Right lobe of liver (tissue), 6 donors: ENCODE measurements at regions of chr17 and their contacts with region 1.

Region 1: DNA sequence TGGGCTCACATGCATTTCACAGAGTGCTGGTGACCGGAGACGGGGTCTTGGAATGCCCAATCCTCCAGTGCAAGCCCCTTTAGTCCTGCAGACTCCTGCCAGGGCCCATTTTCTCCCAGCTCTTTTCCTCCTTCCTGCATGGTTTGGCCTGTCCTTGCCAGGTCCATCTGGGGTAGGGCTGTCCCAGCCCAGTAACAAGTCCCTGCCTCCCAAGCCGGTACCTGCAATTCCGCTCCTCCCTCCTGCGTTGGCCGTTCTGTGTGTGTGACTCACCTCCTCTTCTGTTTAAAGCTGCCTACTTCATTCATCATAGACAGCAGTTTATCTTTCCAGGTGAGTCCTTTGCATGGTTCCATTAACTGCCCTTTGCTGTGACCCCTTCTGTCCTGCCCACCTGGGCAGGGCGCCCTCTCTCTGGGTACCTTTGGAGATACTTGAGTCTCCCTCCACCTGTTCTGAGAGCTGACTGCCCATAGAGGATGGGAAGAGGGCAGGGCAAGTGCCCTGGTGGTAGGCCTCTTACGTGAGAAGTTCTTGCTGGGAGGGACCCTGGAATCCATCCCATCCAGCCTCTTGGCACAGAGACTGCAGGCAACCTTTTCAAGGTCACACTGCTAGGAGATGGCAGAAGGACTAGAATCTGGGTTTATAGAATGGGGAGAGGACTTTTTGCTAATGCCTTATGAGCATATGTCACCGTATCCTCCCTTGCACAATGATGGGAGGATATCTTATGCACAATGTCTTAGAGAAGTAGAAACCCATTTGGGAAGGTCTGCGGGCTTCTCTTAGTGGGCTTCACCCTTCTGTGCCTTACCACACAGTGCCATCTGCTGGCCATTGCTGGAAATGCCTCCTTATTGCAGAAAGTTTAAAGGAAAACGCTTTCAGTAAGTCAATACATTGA is 29.7 kb upstream of the LGALS9 start:
- DNase-seq: peak; percentile 44 to 75 (median 73)
- ATAC-seq: peak; percentile 57 to 77 (median 69)
- H3K4me3 ChIP-seq: no peak overlapping the region
- H3K27ac ChIP-seq: no peak overlapping the region
- H3K4me1 ChIP-seq: no peaks in the 10 kb centered on the region
- H3K27me3 ChIP-seq: no peaks in the 10 kb centered on the region
- CTCF ChIP-seq: peak; percentile 90 to 94 (median 92)
- POLR2A ChIP-seq: no peak

Region 2: DNA sequence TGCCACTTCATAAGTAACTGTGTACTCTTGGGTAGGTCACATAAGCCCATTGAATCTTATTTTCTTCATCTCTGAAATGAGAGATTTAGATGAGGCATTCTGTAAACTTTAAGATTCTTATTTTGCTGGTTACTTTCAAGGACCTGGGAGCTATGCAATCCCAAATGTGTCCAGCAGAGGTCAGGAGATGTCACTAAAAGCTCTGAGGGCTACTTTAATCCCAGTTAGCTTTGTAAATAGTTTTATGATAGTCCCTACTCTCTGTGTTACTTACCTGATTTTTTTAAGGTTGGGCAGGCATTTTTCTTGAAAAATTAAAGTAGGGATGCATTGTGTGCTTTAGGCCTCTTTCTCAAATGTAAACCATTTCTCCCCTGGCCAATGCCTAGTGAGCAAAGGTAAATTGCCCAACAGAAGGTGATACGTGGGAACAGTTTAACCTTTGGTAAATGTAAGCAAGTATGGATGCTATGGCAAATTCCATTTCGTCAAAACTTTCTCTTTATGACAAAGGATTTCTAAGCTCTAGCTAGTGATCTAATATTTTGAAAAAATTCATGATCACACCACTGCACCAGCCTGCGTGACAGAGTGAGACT is 364.5 kb before region 1 on chr17:
- intact Hi-C with region 1: loop called (anchors 5 to 10 kb)
- DNase-seq: peak in 1 of 3 donors; percentile 64
- ATAC-seq: peak; percentile 88 to 94 (median 91)
- H3K4me3 ChIP-seq: no peak overlapping the region
- H3K27ac ChIP-seq: no peak overlapping the region
- H3K4me1 ChIP-seq: no peaks in the 10 kb centered on the region
- H3K27me3 ChIP-seq: no peaks in the 10 kb centered on the region
- CTCF ChIP-seq: peak; percentile 91 to 98 (median 94)
- POLR2A ChIP-seq: no peak

Region 3: DNA sequence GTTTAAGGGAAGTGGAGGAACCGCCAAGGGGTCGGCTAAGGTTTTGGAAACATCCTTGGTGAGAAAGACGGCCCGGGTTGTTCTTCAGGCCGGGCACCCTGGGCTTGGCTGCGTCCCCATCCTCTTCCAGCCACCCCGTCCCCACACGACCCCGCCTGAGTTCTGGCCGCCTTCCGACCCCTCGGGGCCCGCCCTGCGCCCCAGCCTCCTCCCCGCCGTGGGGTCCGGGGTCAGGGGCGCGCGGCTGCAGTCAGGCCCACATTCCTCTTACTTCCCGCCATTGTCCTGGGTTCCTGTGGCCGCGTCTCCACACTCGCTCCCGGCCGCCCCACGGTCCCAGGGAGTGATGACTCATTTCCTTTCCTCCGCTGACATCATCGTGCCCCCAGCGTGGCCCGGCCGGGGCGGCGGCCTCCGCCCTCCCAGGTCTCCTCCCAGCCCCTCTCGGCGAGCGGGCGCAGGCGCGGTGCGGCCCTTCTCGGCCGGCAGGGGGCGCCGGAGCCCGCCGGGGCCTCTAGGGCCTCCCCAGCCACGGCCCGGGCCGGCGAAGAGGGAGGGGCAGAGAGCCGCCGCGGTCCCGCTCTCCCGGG is 247.8 kb before region 1 on chr17:
- intact Hi-C with region 1: loop called (anchors 10 kb)
- DNase-seq: peak; percentile 90 to 95 (median 94)
- ATAC-seq: peak; percentile 90 to 96 (median 92)
- H3K4me3 ChIP-seq: peak overlapping the region; percentile 62 to 83 (median 72)
- H3K27ac ChIP-seq: peak overlapping the region; percentile 81 to 98 (median 90)
- H3K4me1 ChIP-seq: peaks cover 0 to 15% (median 0%) of the 10 kb centered on the region in 4 donors
- H3K27me3 ChIP-seq: no peaks in the 10 kb centered on the region
- CTCF ChIP-seq: peak; percentile 88 to 100 (median 93)
- POLR2A ChIP-seq: peak; percentile 96

Region 4: GRCh38 chr17:27506348-27507231 is 94.7 kb before region 1 on chr17:
- intact Hi-C with region 1: loop called in 1 of 2 experiments (anchors 10 kb)
- DNase-seq: no peak
- ATAC-seq: no peak
- H3K4me3 ChIP-seq: no peak overlapping the region
- H3K27ac ChIP-seq: no peak overlapping the region
- H3K4me1 ChIP-seq: no peaks in the 10 kb centered on the region
- H3K27me3 ChIP-seq: no peaks in the 10 kb centered on the region
- CTCF ChIP-seq: no peak
- POLR2A ChIP-seq: no peak

Region 5: GRCh38 chr17:27644586-27644985 is 43.3 kb after region 1 on chr17:
- intact Hi-C with region 1: no loop called
- DNase-seq: peak in 1 of 3 donors; percentile 87
- ATAC-seq: peak; percentile 33 to 92 (median 60)
- H3K4me3 ChIP-seq: no peak overlapping the region
- H3K27ac ChIP-seq: no peak overlapping the region
- H3K4me1 ChIP-seq: no peaks in the 10 kb centered on the region
- H3K27me3 ChIP-seq: no peaks in the 10 kb centered on the region
- CTCF ChIP-seq: no peak
- POLR2A ChIP-seq: no peak

Region 6: DNA sequence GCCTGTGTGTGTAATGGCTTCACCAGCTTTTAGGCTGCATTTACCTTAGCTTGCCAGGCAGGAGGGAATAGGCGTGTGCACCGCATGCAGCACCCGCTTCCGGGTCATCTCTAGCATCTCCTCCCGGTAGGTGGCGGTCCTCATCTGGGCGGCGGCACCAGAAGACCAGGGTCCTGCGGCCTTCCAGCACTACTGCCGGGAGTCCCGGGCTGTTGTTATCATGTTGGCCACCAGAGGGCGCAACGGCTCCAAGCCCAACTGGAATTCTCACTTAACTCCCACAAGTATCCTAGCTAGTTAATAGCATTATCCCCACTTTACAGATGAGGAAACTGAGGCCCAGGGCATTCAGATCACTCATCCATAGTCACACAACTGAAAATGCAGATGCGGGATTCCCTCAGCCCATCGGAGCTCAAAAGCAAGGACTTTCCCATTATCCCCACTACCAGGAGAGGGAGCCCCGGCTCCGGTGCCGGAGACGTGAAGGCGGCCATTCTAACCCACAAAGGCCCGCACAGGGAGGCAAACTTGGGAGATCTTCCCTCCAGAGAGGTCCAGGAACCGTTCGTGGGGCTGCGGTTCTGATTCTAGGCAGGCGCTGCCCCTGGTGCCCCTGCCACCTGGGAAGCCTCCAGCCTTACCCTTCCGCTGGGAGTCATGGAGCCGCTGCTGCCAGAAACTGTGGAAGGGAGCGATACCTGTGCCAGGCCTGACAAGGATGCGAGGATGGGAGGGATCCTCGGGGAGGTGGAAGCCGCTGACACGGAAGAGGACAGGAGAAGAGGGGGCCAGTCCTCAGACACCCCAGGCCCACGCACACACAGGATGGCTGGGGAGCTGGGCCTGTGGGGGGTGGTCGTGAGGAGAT is 53.6 kb after region 1 on chr17:
- intact Hi-C with region 1: loop called (anchors 2 to 5 kb)
- DNase-seq: peak; percentile 70 to 78 (median 77)
- ATAC-seq: peak; percentile 64 to 86 (median 80)
- H3K4me3 ChIP-seq: no peak overlapping the region
- H3K27ac ChIP-seq: no peak overlapping the region
- H3K4me1 ChIP-seq: no peaks in the 10 kb centered on the region
- H3K27me3 ChIP-seq: no peaks in the 10 kb centered on the region
- CTCF ChIP-seq: peak; percentile 90 to 98 (median 94)
- POLR2A ChIP-seq: no peak